IMR-90 (cell line): ENCODE measurements at regions of chr13 and their contacts with region 1.

Region 1: DNA sequence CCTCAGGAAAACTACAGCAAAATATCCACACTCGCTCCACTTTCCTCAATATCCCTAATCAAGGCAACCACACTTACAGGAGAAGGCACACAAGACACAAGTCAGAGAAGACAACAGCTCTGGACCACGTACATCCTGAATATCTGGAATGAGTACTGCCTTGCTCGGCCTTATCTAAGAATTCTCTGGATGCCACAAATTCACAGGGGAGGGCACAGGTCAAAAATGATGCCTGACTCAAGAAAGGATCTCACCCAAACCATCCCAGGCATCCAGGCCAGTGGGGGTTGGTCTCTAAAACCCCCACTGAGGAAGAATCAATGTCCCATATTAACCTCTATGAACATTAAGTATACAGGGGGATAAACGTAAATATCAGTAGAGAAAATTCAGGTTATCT is 29.9 kb downstream of the ATP7B start:
- DNase-seq: no peak
- ATAC-seq: peak; percentile 78
- H3K4me3 ChIP-seq: no peak overlapping the region
- H3K27ac ChIP-seq: no peak overlapping the region
- H3K4me1 ChIP-seq: peaks cover 2% of the 10 kb centered on the region; the same call in 1 of the 2 replicates
- H3K27me3 ChIP-seq: peaks cover 3% of the 10 kb centered on the region; the same call in 1 of the 2 replicates
- CTCF ChIP-seq: no peak
- POLR2A ChIP-seq: no peak
- RAD21 ChIP-seq: no peak

Region 2: DNA sequence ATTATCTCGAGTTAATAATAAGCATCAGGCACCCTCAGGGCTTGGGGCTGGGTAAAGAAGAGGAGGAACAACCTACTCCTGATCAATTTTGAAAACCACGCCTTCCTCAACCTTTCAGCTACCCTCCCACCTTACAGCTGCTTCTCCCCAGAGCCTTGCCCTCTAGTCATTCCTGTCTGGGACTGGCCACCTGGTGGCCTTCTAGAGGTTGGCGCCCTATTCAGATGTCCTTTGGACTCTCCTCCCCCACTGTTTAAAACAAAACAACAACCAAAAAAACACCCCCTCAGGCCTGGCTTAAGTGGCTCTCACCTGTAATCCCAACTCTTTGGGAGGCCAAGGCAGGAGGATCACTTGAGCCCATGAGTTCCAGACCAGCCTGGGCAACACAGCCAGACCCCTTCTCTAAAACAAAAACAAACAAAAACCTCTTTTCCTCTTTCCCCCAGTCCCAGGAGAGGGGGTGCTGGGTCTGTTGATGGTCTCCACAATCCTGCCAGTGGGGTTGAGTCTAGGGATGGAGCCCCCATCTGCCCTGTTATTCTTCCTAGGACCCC is 57.3 kb before region 1 on chr13:
- CTCF ChIA-PET with region 1: no interaction called
- POLR2A ChIA-PET with region 1: no interaction called
- dilution Hi-C with region 1: no loop called
- in situ Hi-C with region 1: no loop called
- intact Hi-C with region 1: no loop called
- DNase-seq: no peak
- ATAC-seq: no peak
- H3K4me3 ChIP-seq: no peak overlapping the region
- H3K27ac ChIP-seq: no peak overlapping the region
- H3K4me1 ChIP-seq: no peaks in the 10 kb centered on the region
- H3K27me3 ChIP-seq: peaks cover 2% of the 10 kb centered on the region; the same call in 1 of the 2 replicates
- CTCF ChIP-seq: 0 out of 2 replicates have a peak, but pooled peaks have one; percentile 15
- POLR2A ChIP-seq: no peak
- RAD21 ChIP-seq: no peak

Region 3: DNA sequence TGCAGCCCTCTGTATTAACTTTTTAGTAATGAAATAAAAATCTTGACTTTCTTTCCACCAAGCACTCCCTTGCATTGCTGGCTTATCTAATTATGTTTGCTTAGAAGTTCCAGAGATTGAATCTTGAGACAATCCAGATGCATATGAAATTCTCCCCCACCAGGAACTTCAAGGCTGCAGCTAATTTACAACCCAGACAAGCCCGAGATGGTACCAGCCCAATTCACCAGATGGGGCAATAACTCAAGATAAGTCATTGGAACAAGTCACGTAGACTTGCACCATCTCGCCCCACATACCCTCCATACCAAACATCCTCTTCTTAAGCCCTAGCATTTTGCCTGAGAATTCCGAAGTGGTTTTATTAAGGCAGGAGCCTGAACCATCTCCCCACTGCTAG is 72.1 kb after region 1 on chr13:
- CTCF ChIA-PET with region 1: no interaction called
- POLR2A ChIA-PET with region 1: no interaction called
- dilution Hi-C with region 1: no loop called
- in situ Hi-C with region 1: loop called (anchors 5 kb)
- intact Hi-C with region 1: no loop called
- DNase-seq: no peak
- ATAC-seq: no peak
- H3K4me3 ChIP-seq: no peak overlapping the region
- H3K27ac ChIP-seq: no peak overlapping the region
- H3K4me1 ChIP-seq: no peaks in the 10 kb centered on the region
- H3K27me3 ChIP-seq: no peaks in the 10 kb centered on the region
- CTCF ChIP-seq: no peak
- POLR2A ChIP-seq: no peak
- RAD21 ChIP-seq: no peak

Region 4: DNA sequence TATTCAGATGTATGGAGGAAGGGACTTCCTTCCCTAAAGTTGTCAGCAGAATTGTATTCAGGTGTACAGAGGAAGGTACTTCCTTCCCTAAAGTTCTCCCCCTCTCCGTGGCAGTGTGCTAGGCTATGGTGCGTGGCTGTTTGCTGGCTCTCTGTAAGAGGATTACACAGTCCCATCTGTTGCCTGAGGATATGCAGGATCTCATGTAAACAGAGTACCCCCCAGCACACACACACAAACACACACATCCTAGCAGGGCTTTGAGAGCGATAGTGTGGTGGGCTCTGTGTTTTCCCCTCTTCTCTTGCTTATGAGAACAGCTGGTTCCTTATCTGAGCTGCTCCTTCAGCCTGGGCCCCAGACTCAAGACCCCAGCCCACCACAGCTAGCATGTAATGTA is 137.2 kb after region 1 on chr13:
- CTCF ChIA-PET with region 1: no interaction called
- POLR2A ChIA-PET with region 1: no interaction called
- dilution Hi-C with region 1: no loop called
- in situ Hi-C with region 1: no loop called
- intact Hi-C with region 1: no loop called
- DNase-seq: no peak
- ATAC-seq: no peak
- H3K4me3 ChIP-seq: no peak overlapping the region
- H3K27ac ChIP-seq: no peak overlapping the region
- H3K4me1 ChIP-seq: no peaks in the 10 kb centered on the region
- H3K27me3 ChIP-seq: peaks cover 13% of the 10 kb centered on the region
- CTCF ChIP-seq: no peak
- POLR2A ChIP-seq: no peak
- RAD21 ChIP-seq: no peak

Region 5: GRCh38 chr13:52421216-52421615 is 439.9 kb after region 1 on chr13:
- CTCF ChIA-PET with region 1: no interaction called
- POLR2A ChIA-PET with region 1: no interaction called
- dilution Hi-C with region 1: no loop called
- in situ Hi-C with region 1: no loop called
- intact Hi-C with region 1: no loop called
- DNase-seq: no peak
- ATAC-seq: no peak
- H3K4me3 ChIP-seq: no peak overlapping the region
- H3K27ac ChIP-seq: no peak overlapping the region
- H3K4me1 ChIP-seq: no peaks in the 10 kb centered on the region
- H3K27me3 ChIP-seq: no peaks in the 10 kb centered on the region
- CTCF ChIP-seq: no peak
- POLR2A ChIP-seq: no peak
- RAD21 ChIP-seq: no peak

Region 6: GRCh38 chr13:53885997-53886396 is 1904.6 kb after region 1 on chr13:
- CTCF ChIA-PET with region 1: no interaction called
- POLR2A ChIA-PET with region 1: no interaction called
- dilution Hi-C with region 1: no loop called
- in situ Hi-C with region 1: no loop called
- intact Hi-C with region 1: no loop called
- DNase-seq: no peak
- ATAC-seq: no peak
- H3K4me3 ChIP-seq: no peak overlapping the region
- H3K27ac ChIP-seq: no peak overlapping the region
- H3K4me1 ChIP-seq: no peaks in the 10 kb centered on the region
- H3K27me3 ChIP-seq: no peaks in the 10 kb centered on the region
- CTCF ChIP-seq: no peak
- POLR2A ChIP-seq: no peak
- RAD21 ChIP-seq: no peak